ENCODE measurements at regions of chr10 and their contacts with region 1.

Region 1: GRCh38 chr10:99435986-99436638 is 5.7 kb upstream of the GOT1 start:
- DNase-seq: no peak
- H3K4me3 ChIP-seq: no peak overlapping the region
- H3K27ac ChIP-seq: peak overlapping the region; percentile 1
- H3K4me1 ChIP-seq: no peaks in the 10 kb centered on the region
- H3K27me3 ChIP-seq: no peaks in the 10 kb centered on the region
- CTCF ChIP-seq: peak; percentile 38

Region 2: GRCh38 chr10:98673171-98673782 is 762.8 kb before region 1 on chr10:
- intact Hi-C with region 1: no loop called
- DNase-seq: no peak
- H3K4me3 ChIP-seq: no peak overlapping the region
- H3K27ac ChIP-seq: no peak overlapping the region
- H3K4me1 ChIP-seq: no peaks in the 10 kb centered on the region
- H3K27me3 ChIP-seq: no peaks in the 10 kb centered on the region
- CTCF ChIP-seq: no peak

Region 3: DNA sequence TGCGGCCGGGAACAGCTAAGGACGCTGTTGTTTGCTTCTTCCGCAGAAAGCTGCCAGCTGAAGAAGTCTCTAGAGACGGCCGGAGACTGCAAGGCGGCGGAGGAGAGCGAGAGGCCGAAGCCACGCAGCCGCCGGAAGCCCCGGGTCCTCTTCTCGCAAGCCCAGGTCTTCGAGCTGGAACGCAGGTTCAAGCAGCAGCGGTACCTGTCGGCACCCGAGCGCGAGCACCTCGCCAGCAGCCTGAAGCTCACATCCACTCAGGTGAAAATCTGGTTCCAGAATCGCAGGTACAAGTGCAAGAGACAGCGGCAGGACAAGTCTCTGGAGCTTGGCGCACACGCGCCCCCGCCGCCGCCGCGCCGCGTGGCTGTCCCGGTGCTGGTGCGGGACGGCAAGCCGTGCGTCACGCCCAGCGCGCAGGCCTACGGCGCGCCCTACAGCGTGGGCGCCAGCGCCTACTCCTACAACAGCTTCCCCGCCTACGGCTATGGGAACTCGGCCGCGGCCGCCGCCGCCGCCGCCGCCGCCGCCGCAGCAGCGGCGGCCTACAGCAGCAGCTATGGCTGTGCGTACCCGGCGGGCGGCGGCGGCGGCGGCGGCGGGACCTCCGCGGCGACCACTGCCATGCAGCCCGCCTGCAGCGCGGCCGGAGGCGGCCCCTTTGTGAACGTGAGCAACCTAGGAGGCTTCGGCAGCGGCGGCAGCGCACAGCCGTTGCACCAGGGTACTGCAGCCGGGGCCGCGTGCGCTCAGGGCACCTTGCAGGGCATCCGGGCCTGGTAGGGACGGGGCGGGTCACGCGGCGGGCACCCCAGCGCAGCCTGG is 99.0 kb after region 1 on chr10:
- intact Hi-C with region 1: loop called (anchors 5 kb)
- DNase-seq: no peak
- H3K4me3 ChIP-seq: peak overlapping the region; percentile 40
- H3K27ac ChIP-seq: peak overlapping the region; percentile 46
- H3K4me1 ChIP-seq: peaks cover 14% of the 10 kb centered on the region
- H3K27me3 ChIP-seq: peaks cover 94% of the 10 kb centered on the region
- CTCF ChIP-seq: no peak